HepG2 (cell line): ENCODE measurements at regions of chr22 and their contacts with region 1.

Region 1: GRCh38 chr22:38923463-38924346 is 33.7 kb upstream of the APOBEC3A start:
- DNase-seq: peak; percentile 88
- ATAC-seq: peak; percentile 95
- H3K4me3 ChIP-seq: peak overlapping the region; percentile 4 to 49 (median 22); a peak in 5 of 6 replicates
- H3K27ac ChIP-seq: peak overlapping the region; percentile 70
- H3K4me1 ChIP-seq: peaks cover 53% of the 10 kb centered on the region
- H3K27me3 ChIP-seq: no peaks in the 10 kb centered on the region
- CTCF ChIP-seq: peak; percentile 43
- EP300 ChIP-seq: no peak
- POLR2A ChIP-seq: peak; percentile 36 to 48; a peak in 1 of 4 replicates
- RAD21 ChIP-seq: no peak

Region 2: DNA sequence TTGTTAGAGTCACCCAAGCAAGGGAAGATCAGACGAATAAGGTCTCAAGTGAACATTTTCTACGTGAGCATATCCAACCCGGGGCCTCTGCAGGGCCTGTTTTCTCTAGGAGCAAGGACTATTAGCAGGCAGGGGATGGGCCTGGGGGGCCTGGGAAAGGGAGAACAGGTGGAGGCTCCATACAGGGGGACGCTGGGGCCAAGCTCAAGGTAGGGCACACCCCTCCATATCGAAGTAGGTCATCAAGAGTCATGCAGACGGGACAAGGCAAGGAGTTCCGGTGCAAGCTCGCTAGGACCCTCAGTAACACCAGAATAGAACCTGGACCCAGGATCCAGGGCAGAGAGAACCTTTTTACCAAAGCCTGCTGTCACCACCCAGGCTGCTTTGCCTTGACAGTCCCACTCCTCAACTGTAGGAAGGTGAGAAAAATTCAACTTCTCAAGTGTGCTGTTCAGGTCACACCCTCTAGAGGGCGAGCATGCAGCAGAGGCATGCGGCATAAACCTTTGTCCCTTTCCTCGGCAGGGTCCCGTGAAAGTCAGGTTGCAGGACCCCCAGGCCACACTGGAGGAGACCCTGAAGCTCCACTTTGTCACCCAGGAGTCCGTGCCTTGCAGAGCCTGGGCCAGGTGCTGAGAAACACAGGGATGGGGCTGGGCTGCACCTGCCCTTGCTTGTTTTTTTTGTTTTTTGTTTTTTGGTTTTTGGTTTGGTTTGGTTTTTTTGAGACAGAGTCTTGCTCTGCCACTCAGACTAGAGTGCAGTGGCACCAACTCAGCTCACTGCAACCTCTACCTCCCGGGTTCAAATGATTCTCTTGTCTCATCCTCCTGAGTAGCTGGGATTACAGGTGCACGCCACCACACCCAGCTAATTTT is 49.8 kb after region 1 on chr22:
- CTCF ChIA-PET with region 1: no interaction called
- POLR2A ChIA-PET with region 1: no interaction called
- in situ Hi-C with region 1: no loop called
- intact Hi-C with region 1: loop called (anchors 5 kb)
- DNase-seq: peak; percentile 42
- ATAC-seq: peak; percentile 83
- H3K4me3 ChIP-seq: no peak overlapping the region
- H3K27ac ChIP-seq: no peak overlapping the region
- H3K4me1 ChIP-seq: no peaks in the 10 kb centered on the region
- H3K27me3 ChIP-seq: peaks cover 1 to 11% of the 10 kb centered on the region in 2 experiments; a peak in 1 of 5 replicates
- CTCF ChIP-seq: peak; percentile 86
- EP300 ChIP-seq: no peak
- POLR2A ChIP-seq: no peak
- RAD21 ChIP-seq: peak; percentile 44; the same call in 1 of the 2 replicates

Region 3: DNA sequence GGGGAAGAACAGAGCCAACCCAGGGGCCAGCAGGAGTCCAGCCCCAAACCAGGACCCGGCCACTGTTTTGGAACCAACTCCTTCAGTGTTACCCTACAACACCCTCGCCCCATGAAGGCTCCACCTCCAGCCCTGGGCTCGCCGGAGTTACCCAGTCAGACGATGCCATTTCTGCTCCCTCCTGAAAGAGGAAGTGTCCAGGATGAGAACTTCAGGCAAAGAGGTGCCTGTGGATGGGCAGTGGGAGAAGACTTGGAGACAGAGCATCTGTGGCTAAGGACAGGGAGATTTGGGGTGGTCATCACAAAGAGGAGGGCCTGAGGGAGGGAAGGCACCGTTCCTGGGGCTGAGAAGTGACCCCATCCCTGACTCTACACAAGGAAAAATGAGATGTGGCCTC is 72.4 kb after region 1 on chr22:
- CTCF ChIA-PET with region 1: no interaction called
- POLR2A ChIA-PET with region 1: no interaction called
- in situ Hi-C with region 1: no loop called
- intact Hi-C with region 1: no loop called
- DNase-seq: no peak
- ATAC-seq: no peak
- H3K4me3 ChIP-seq: no peak overlapping the region
- H3K27ac ChIP-seq: no peak overlapping the region
- H3K4me1 ChIP-seq: no peaks in the 10 kb centered on the region
- H3K27me3 ChIP-seq: peaks cover 1 to 9% of the 10 kb centered on the region in 2 experiments; a peak in 2 of 5 replicates
- CTCF ChIP-seq: no peak
- EP300 ChIP-seq: no peak
- POLR2A ChIP-seq: no peak
- RAD21 ChIP-seq: no peak